Activated CD4-positive, alpha-beta T cell treated with anti-CD3 and anti-CD28 coated beads, Interleukin-2, amount 10 ng/mL, durations not matched to agents 24 days and 14 days (primary cell): ENCODE measurements at regions of chr12 and their contacts with region 1.

Region 1: DNA sequence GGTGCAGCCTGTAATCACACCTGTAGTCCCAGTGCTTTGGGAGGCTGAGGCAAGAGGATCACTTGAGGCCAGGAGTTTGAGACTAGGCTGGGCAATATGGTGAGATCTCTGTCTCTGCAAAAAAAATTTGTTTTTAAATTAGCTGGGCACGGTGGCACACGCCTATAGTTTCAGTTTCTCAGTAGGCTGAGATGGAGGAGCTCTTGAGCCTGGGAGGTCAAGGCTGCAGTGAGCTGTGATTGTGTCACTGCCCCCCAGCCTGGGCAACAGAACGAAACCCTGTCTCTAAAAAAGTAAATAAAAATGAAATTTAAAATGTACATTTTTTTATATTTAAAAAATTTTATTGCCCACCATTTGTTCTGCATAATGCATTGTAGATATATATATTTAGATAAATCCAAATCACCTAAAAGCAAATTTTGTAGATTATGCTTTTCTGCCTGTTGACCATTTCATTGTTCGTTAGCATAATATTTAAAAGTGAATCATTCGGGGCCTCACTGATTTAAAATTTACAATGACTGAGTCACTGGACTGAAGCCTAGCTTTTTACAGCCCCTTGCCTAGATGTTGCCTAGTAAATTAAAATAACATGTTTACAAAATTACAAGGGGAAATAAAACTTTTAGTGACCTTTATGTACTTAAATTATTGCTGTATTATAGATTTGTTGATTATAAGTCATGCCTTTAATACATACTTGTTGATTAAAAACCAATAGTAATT is 87.9 kb downstream of the USP15 start:
- DNase-seq: peak; percentile 51
- H3K4me3 Mint-ChIP-seq: no peak overlapping the region
- H3K27ac Mint-ChIP-seq: no peak overlapping the region
- H3K4me1 Mint-ChIP-seq: peaks cover 15% of the 10 kb centered on the region
- H3K27me3 Mint-ChIP-seq: no peaks in the 10 kb centered on the region

Region 2: GRCh38 chr12:62379026-62379722 is 31.1 kb after region 1 on chr12:
- intact Hi-C with region 1: loop called (anchors 5 kb)
- DNase-seq: no peak
- H3K4me3 Mint-ChIP-seq: no peak overlapping the region
- H3K27ac Mint-ChIP-seq: no peak overlapping the region
- H3K4me1 Mint-ChIP-seq: peaks cover 17% of the 10 kb centered on the region
- H3K27me3 Mint-ChIP-seq: no peaks in the 10 kb centered on the region